G401 (cell line): ENCODE measurements at regions of chr12 and their contacts with region 1.

Region 1: DNA sequence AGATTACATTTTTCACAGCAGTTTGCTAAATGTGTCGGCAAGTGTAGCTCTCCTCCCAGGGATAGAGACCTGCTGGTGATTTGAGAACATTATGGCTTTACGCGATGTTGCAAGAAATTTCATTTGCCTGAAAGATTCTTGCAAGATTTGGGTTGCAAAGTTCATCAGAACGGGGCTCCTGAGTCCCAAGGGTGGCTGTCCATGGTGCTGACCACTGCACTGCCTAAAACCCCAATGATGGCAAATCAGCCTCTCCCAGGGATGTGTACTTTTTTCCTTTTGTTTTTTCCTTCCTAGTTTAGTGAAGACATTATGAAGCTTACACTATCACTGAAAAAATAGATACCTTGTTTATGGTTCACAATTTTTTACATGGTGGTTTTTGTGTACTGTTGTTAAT is 85.4 kb downstream of the WSCD2 start:
- DNase-seq: no peak

Region 2: DNA sequence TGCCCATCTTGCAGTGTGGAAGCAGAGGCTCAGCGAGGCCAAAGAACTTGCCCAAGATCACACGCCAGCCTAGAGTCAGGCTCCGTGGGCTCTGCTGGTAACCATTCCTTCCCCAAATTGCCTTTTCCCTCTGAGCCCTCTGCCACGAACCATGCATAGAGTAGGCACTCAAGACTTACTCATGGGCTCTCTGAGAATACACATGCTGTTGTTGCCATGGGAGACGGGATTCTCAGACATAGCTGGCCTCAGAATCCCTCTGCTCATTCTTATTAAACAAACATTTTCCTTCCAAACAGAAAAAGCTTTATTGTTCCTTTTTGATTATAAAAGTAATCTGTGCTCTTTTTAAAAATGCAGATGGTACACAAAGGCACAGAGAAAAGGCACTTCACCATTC is 137.9 kb before region 1 on chr12:
- in situ Hi-C with region 1: loop called (anchors 5 kb)
- DNase-seq: no peak

Region 3: GRCh38 chr12:108305520-108305919 is 91.0 kb after region 1 on chr12:
- in situ Hi-C with region 1: no loop called
- DNase-seq: no peak